Heart left ventricle (tissue), 16 donors: ENCODE measurements at regions of chr16 and their contacts with region 1.

Region 1: GRCh38 chr16:26605626-26606271 is 461.0 kb upstream of the C16orf82 start:
- DNase-seq: no peak
- ATAC-seq: no peak
- H3K4me3 ChIP-seq: no peak overlapping the region
- H3K27ac ChIP-seq: no peak overlapping the region
- H3K4me1 ChIP-seq: no peaks in the 10 kb centered on the region
- H3K27me3 ChIP-seq: peaks cover 0 to 5% (median 0%) of the 10 kb centered on the region in 9 donors
- CTCF ChIP-seq: no peak
- POLR2A ChIP-seq: no peak

Region 2: DNA sequence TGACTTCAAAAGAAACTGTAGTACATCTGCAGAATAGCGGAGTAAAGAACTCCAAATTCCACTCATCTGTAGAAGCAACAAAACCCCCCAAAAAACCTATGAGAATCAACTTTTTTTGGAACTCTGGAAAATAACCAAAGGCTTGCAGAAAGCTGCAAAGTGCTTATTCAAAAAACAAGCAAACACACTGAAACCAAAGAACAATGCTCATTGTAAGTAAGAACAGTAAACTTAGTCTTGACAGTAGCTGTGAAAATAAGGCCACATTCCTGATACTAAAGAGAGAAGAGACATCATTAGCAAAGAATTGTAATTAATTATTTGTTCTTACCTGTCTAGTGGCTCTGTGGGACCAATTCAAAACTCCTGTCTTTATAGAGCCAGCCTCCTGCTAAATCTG is 73.3 kb before region 1 on chr16:
- intact Hi-C with region 1: loop called in 1 of 10 experiments (anchors 2 kb)
- DNase-seq: no peak
- ATAC-seq: no peak
- H3K4me3 ChIP-seq: no peak overlapping the region
- H3K27ac ChIP-seq: no peak overlapping the region
- H3K4me1 ChIP-seq: no peaks in the 10 kb centered on the region
- H3K27me3 ChIP-seq: peaks cover 0 to 7% (median 0%) of the 10 kb centered on the region in 9 donors
- CTCF ChIP-seq: no peak
- POLR2A ChIP-seq: no peak

Region 3: DNA sequence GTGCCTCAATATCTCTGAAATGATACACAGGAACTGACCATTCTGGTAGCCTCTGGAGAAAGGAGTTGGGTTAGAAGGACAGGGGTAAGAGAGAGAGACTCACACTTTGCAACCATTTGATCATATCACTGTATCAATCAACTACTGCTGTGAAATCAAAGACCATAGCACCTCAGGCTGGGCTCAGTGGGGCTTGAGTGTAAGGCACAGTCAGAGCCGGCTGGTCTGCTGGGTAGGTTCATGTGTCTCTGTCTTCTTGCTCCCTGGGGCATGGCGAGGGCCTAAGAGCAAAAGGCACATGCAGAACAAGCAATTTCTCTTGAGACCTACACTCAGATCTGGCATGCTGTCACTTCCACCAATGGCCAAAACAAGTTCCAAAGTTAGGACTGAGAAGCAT is 414.3 kb after region 1 on chr16:
- intact Hi-C with region 1: no loop called
- DNase-seq: no peak
- ATAC-seq: no peak
- H3K4me3 ChIP-seq: no peak overlapping the region
- H3K27ac ChIP-seq: no peak overlapping the region
- H3K4me1 ChIP-seq: no peaks in the 10 kb centered on the region
- H3K27me3 ChIP-seq: peaks cover 0 to 9% (median 0%) of the 10 kb centered on the region in 9 donors
- CTCF ChIP-seq: no peak
- POLR2A ChIP-seq: no peak